OCI-LY7 (cell line): ENCODE measurements at regions of chr7 and their contacts with region 1.

Region 1: GRCh38 chr7:94050046-94050445 is 45.9 kb upstream of the BET1 start:
- DNase-seq: peak; percentile 93
- H3K4me3 ChIP-seq: peak overlapping the region; percentile 48
- H3K27ac ChIP-seq: peak overlapping the region; percentile 97
- H3K4me1 ChIP-seq: peaks cover 83% of the 10 kb centered on the region
- CTCF ChIP-seq: no peak

Region 2: DNA sequence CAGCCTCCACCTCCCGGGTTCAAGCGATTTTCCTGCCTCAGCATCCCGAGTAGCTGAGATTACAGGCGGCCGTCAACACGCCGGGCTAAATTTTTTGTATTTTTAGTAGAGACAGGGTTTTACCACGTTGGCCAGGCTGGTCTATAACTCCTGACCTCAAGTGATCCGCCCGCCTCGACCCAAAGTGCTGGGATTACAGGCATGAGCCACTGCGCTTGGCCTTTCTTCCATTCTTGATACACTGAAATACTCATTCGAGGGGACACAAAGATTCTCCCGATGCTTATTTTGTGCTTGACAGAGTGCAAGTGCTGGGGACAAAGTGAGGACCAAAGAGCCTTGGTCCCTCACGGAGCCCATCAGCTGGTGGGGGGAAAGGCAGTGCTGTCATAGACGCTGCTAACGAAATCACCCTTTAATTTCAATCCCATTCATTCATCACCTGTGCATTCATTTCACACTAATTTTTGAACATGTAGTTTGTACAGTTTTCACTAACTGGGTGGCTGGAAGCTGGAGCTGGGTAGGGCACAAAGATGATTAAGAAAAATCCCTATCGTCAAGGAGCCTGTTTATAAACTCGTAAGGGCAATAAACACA is 1459.2 kb before region 1 on chr7:
- CTCF ChIA-PET with region 1: no interaction called
- POLR2A ChIA-PET with region 1: no interaction called
- intact Hi-C with region 1: loop called (anchors 5 kb)
- DNase-seq: no peak
- H3K4me3 ChIP-seq: peak overlapping the region; percentile 89
- H3K27ac ChIP-seq: no peak overlapping the region
- H3K4me1 ChIP-seq: peaks cover 35% of the 10 kb centered on the region
- CTCF ChIP-seq: no peak

Region 3: DNA sequence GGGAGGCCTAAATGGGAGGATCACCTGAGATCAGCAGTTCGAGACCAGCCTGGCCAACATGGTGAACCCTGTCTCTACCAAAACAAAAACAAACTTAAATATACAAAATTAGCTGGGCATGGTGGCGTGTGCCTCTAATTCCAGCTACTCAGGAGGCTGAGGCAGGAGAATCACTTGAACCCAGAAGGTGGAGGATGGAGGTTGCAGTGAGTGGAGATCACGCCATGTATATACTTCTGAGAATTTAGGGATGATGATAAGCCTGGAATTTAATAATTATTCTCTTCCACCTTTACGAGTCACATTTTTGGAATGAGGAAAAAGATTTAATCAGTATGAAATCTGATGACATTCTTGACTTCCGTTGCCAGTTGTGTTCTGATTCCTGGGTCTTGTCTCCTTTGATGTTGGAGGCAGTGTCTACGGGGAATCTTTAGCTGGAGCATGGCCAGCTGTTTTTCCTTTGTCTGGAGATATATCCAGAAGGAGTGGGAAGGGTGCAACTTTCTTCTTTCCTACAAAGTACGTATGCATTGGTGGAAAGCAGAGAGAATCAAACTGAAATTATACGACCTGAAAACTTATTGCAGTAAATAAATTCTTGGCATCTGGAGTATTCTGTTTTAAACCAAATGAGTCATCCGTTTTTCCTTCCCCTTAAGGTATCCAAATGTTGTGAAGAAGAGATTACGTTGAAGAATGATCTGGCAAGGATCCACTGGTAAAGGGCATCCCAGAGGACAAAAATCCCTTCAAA is 135.5 kb before region 1 on chr7:
- CTCF ChIA-PET with region 1: no interaction called
- POLR2A ChIA-PET with region 1: no interaction called
- intact Hi-C with region 1: no loop called
- DNase-seq: no peak
- H3K4me3 ChIP-seq: no peak overlapping the region
- H3K27ac ChIP-seq: no peak overlapping the region
- H3K4me1 ChIP-seq: peaks cover 21% of the 10 kb centered on the region
- CTCF ChIP-seq: no peak

Region 4: GRCh38 chr7:94004024-94004951 is 45.8 kb before region 1 on chr7 and contains the start of gene BET1:
- CTCF ChIA-PET with region 1: no interaction called
- POLR2A ChIA-PET with region 1: interaction called, 9 read pairs
- intact Hi-C with region 1: loop called (anchors 1 kb)
- DNase-seq: peak; percentile 97
- H3K4me3 ChIP-seq: peak within 1 kb of the TSS; percentile 81
- H3K27ac ChIP-seq: peak within 1 kb of the TSS; percentile 16
- H3K4me1 ChIP-seq: peaks cover 45% of the 10 kb centered on the region
- CTCF ChIP-seq: no peak
- total RNA-seq, gene BET1: 14.3 and 20.4 TPM in 2 replicates

Region 5: DNA sequence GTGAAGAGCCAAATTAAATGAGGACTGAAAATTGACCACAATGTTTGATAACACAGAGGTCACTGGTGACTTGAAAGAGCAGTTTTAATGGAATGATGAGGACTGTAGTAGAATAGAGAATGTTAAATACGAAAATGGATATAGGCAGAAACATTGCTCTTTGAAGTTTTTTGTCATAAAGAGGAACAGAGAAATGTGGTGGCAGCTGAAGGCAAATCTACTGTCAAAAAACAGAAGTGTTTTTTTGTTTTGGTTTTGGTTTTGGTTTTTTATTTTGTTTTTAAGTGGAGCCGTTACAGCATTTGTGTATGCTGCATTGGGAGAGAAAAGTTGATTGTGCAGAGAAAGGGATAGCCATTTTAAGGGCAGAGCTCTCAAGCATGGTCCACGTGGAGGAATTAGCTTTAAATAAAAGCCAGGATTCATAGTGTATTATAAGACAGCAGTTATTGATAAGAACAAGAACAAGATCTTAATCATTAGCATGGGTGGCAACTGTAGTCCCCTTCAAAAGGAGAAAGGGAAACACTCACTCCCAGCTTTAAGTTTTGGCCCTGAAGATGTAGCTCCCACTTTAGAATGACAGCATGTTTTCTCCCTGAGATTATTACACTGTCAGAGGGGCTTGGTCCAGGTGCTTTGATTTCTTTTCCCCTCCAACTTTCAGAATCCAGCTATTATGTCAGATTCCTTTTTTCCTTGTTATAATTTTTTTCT is 110.8 kb after region 1 on chr7:
- CTCF ChIA-PET with region 1: no interaction called
- POLR2A ChIA-PET with region 1: interaction called, 5 read pairs
- intact Hi-C with region 1: loop called (anchors 2 kb)
- DNase-seq: peak; percentile 90
- H3K4me3 ChIP-seq: peak overlapping the region; percentile 53
- H3K27ac ChIP-seq: peak overlapping the region; percentile 91
- H3K4me1 ChIP-seq: peaks cover 38% of the 10 kb centered on the region
- CTCF ChIP-seq: no peak

Region 6: DNA sequence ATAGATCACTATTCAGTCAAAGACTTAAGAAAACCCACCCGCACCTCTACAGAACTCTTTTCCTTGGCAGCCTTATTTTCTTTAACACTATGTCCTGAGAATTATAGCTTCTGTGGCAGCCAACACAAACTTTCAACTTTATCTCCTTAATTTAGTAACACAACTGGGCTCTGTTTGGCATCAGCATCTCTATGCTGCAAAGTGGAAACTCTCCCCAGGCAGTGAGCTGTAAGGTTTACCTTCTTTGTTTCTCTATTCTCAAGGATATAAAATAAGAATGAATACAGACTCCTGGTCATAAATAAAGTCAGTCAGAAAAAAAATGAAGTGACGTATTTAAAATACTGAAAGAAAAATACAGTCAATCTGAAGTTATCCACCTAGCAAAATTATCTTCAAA is 742.2 kb after region 1 on chr7:
- CTCF ChIA-PET with region 1: no interaction called
- POLR2A ChIA-PET with region 1: no interaction called
- intact Hi-C with region 1: no loop called
- DNase-seq: no peak
- H3K4me3 ChIP-seq: no peak overlapping the region
- H3K27ac ChIP-seq: no peak overlapping the region
- H3K4me1 ChIP-seq: no peaks in the 10 kb centered on the region
- CTCF ChIP-seq: no peak